ENCODE measurements at regions of chr10 and their contacts with region 1.

Region 1: DNA sequence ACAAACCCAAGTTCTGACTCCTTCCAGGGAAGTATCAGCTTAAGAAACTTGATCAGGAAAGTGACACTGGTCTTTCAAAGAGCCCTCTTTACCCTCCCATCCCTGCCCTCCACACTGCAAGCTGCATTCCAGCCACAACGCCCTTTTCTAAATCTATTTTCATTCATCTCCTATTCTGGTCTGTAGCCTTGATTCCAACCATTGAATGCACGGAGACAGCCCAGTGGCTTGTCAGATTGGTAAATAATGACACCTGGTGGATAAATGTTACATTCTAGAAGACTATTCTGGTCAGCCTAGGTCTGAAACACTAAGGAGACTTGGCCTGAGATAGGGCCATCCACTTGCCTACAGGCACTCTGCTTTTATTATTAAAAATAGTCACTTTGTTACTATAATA is 20.9 kb downstream of the MORN4 start:
- DNase-seq: no peak
- H3K4me3 ChIP-seq: no peak overlapping the region
- CTCF ChIP-seq: peak; percentile 20

Region 2: GRCh38 chr10:97407211-97407951 is 205.0 kb before region 1 on chr10:
- CTCF ChIA-PET with region 1: interaction called, 17 read pairs
- POLR2A ChIA-PET with region 1: no interaction called
- DNase-seq: no peak
- H3K4me3 ChIP-seq: no peak overlapping the region
- CTCF ChIP-seq: peak; percentile 79

Region 3: GRCh38 chr10:97534746-97535367 is 77.5 kb before region 1 on chr10:
- CTCF ChIA-PET with region 1: interaction called, 11 read pairs
- POLR2A ChIA-PET with region 1: no interaction called
- DNase-seq: no peak
- H3K4me3 ChIP-seq: no peak overlapping the region
- CTCF ChIP-seq: peak; percentile 56

Region 4: GRCh38 chr10:97572214-97572989 is 40.0 kb before region 1 on chr10 and contains the start of gene ANKRD2:
- CTCF ChIA-PET with region 1: interaction called, 199 read pairs
- POLR2A ChIA-PET with region 1: no interaction called
- DNase-seq: no peak
- H3K4me3 ChIP-seq: no peak within 1 kb of the TSS
- CTCF ChIP-seq: peak; percentile 93

Region 5: DNA sequence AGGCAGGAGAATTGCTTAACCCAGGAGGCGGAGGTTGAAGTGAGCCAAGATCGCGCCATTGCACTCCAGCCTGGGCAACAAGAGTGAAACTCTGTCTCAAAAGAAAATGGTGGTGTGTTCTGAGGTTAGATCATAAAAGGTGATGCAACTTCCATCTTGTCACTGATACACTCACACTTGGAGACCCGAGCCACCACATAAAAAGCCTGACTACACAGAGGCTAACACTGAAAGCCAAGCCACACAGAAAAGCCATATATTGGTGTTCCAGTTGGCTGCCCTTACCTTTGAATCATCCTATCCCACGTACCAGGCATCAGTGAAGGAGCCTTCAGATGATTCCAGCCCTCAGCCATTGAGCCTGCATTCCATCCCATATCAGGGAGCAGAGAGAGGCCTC is 16.9 kb after region 1 on chr10:
- CTCF ChIA-PET with region 1: interaction called, 18 read pairs
- POLR2A ChIA-PET with region 1: no interaction called
- DNase-seq: no peak
- H3K4me3 ChIP-seq: no peak overlapping the region
- CTCF ChIP-seq: no peak

Region 6: GRCh38 chr10:97759158-97759887 is 146.9 kb after region 1 on chr10:
- CTCF ChIA-PET with region 1: no interaction called
- POLR2A ChIA-PET with region 1: no interaction called
- DNase-seq: no peak
- H3K4me3 ChIP-seq: no peak overlapping the region
- CTCF ChIP-seq: peak; percentile 96

Region 7: DNA sequence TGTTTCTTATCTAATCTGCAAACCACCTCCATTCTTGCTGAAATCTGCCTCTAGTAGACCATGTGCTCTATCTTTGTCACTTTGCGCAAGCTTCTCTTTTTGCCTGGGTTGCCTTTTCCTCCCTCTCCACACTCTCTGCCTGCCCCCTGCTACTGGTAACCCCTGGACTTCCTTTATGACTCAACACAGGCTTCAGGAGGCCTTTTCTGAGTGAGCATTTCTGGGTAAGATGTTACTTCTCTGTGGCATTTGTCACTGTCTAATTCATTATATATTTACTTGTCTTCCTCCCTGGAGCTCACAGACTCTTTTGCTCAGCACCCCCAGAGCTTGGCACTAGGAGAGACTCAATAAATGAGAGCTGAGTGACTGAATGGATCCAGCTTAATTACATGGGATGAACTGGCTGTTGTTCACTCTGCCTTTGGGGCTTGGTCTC is 245.6 kb after region 1 on chr10:
- CTCF ChIA-PET with region 1: no interaction called
- POLR2A ChIA-PET with region 1: no interaction called
- DNase-seq: no peak
- H3K4me3 ChIP-seq: no peak overlapping the region
- CTCF ChIP-seq: no peak